B cell (primary cell): ENCODE measurements at regions of chr3 and their contacts with region 1.

Region 1: GRCh38 chr3:71176366-71176765 is 407.2 kb downstream of the FOXP1 start:
- DNase-seq: no peak
- ATAC-seq: no peak
- H3K4me3 ChIP-seq: no peak overlapping the region
- H3K4me3 Mint-ChIP-seq: no peak overlapping the region
- H3K27ac ChIP-seq: no peak overlapping the region
- H3K27ac Mint-ChIP-seq: no peak overlapping the region
- H3K4me1 ChIP-seq: no peaks in the 10 kb centered on the region
- H3K4me1 Mint-ChIP-seq: peaks cover 13% of the 10 kb centered on the region
- H3K27me3 ChIP-seq: no peaks in the 10 kb centered on the region
- H3K27me3 Mint-ChIP-seq: no peaks in the 10 kb centered on the region
- CTCF ChIP-seq: no peak

Region 2: GRCh38 chr3:71142440-71143161 is 33.8 kb before region 1 on chr3:
- CTCF ChIA-PET with region 1: no interaction called
- POLR2A ChIA-PET with region 1: interaction called, 11 read pairs
- intact Hi-C with region 1: no loop called
- DNase-seq: peak; percentile 53
- ATAC-seq: peak; percentile 55
- H3K4me3 ChIP-seq: no peak overlapping the region
- H3K4me3 Mint-ChIP-seq: no peak overlapping the region
- H3K27ac ChIP-seq: peak overlapping the region in 1 of 2 donors; percentile 56
- H3K27ac Mint-ChIP-seq: peak overlapping the region; percentile 78
- H3K4me1 ChIP-seq: peaks cover 3 to 6% of the 10 kb centered on the region in 2 donors
- H3K4me1 Mint-ChIP-seq: peaks cover 35% of the 10 kb centered on the region
- H3K27me3 ChIP-seq: no peaks in the 10 kb centered on the region
- H3K27me3 Mint-ChIP-seq: no peaks in the 10 kb centered on the region
- CTCF ChIP-seq: no peak

Region 3: GRCh38 chr3:71160800-71161546 is 15.4 kb before region 1 on chr3:
- CTCF ChIA-PET with region 1: no interaction called
- POLR2A ChIA-PET with region 1: no interaction called
- intact Hi-C with region 1: no loop called
- DNase-seq: no peak
- ATAC-seq: no peak
- H3K4me3 ChIP-seq: no peak overlapping the region
- H3K4me3 Mint-ChIP-seq: no peak overlapping the region
- H3K27ac ChIP-seq: no peak overlapping the region
- H3K27ac Mint-ChIP-seq: peak overlapping the region; percentile 17
- H3K4me1 ChIP-seq: peaks cover 2 to 4% of the 10 kb centered on the region in 2 donors
- H3K4me1 Mint-ChIP-seq: peaks cover 36% of the 10 kb centered on the region
- H3K27me3 ChIP-seq: no peaks in the 10 kb centered on the region
- H3K27me3 Mint-ChIP-seq: no peaks in the 10 kb centered on the region
- CTCF ChIP-seq: no peak

Region 4: DNA sequence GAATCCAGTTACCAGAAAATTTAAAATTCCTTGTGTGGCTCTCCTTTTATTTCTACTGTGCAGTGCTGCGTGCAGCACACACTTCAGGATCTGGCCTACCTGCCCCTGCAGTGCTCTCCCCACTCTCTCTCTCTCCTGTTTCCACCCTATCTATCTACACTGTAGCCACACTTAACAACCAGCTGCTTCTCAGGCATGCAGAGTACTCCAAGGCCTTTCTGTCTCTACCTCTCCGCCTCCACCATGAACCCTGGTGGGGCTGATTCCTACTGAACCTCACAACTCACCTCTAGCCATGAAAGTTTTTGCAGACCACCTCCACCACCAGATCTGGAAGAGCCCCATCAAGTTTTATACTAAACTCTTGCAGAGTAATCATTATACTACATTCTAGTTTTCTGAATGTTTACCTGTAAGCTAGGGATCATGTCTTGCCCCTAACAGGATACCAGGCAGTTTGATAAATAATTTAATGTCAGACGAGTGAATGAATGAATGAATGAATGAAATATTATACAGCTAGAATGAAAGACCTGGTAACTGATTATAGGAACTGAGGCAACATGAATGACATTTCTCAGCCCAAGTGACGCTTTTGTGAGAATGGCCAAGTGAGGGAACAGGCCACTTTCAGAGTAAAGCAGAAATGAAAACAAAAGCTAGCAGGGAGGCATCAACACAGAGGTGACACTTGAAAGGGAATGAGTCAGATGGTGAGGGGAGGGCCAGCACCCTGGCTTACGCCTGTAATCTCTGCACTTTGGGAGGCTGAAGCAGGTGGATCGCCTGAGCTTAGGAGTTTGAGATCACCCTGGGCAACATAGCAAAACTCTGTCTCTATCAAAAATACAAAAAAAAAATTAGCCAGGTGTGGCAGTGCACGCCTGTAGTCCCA is 43.6 kb after region 1 on chr3:
- CTCF ChIA-PET with region 1: no interaction called
- POLR2A ChIA-PET with region 1: no interaction called
- intact Hi-C with region 1: loop called (anchors 5 kb)
- DNase-seq: no peak
- ATAC-seq: peak; percentile 73
- H3K4me3 ChIP-seq: no peak overlapping the region
- H3K4me3 Mint-ChIP-seq: no peak overlapping the region
- H3K27ac ChIP-seq: no peak overlapping the region
- H3K27ac Mint-ChIP-seq: peak overlapping the region; percentile 73
- H3K4me1 ChIP-seq: peaks cover 21 to 24% of the 10 kb centered on the region in 2 donors
- H3K4me1 Mint-ChIP-seq: peaks cover 64% of the 10 kb centered on the region
- H3K27me3 ChIP-seq: no peaks in the 10 kb centered on the region
- H3K27me3 Mint-ChIP-seq: no peaks in the 10 kb centered on the region
- CTCF ChIP-seq: no peak

Region 5: DNA sequence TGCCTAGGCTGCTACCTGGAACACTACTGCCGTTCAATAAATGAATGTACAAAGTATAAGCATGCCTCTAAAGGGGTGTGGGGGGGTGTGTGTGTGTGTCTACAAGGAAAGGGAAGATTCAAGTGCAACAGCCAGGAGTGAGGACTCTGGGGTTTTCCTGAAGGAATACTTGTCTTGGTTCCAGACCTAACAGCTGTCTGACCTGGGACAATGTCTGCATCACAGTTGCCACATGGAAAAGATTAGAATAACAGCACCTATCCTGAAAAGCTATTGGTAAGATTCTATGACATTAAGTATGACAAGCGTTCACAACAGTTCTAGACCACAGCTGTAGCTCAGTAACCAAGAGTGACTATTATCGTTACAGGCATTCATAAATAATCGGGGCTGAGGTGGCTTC is 62.0 kb after region 1 on chr3:
- CTCF ChIA-PET with region 1: no interaction called
- POLR2A ChIA-PET with region 1: no interaction called
- intact Hi-C with region 1: no loop called
- DNase-seq: no peak
- ATAC-seq: no peak
- H3K4me3 ChIP-seq: no peak overlapping the region
- H3K4me3 Mint-ChIP-seq: no peak overlapping the region
- H3K27ac ChIP-seq: peak overlapping the region in 1 of 2 donors; percentile 5
- H3K27ac Mint-ChIP-seq: peak overlapping the region; percentile 47
- H3K4me1 ChIP-seq: peaks cover 12 to 30% of the 10 kb centered on the region in 2 donors
- H3K4me1 Mint-ChIP-seq: peaks cover 55% of the 10 kb centered on the region
- H3K27me3 ChIP-seq: no peaks in the 10 kb centered on the region
- H3K27me3 Mint-ChIP-seq: no peaks in the 10 kb centered on the region
- CTCF ChIP-seq: no peak

Region 6: DNA sequence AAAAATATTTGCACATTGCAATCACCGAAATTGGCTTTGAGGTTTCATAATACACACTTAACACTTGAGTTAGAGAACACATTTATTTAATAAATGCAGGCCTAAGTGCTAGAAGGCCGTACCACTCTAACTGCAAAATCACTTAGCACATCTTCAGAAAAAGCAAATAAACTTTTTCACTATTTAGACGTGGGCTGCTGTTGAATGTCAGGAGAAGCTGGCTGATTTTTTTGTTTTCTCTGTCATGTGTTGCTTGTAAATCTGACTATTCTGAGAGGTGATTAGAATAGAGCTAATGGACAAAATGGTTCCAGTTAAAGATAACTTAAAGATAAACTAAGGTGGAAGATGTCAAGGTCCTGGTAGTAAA is 142.1 kb after region 1 on chr3:
- CTCF ChIA-PET with region 1: no interaction called
- POLR2A ChIA-PET with region 1: no interaction called
- intact Hi-C with region 1: no loop called
- DNase-seq: no peak
- ATAC-seq: no peak
- H3K4me3 ChIP-seq: no peak overlapping the region
- H3K4me3 Mint-ChIP-seq: peak overlapping the region; percentile 2
- H3K27ac ChIP-seq: no peak overlapping the region
- H3K27ac Mint-ChIP-seq: no peak overlapping the region
- H3K4me1 ChIP-seq: peaks cover 37 to 45% of the 10 kb centered on the region in 2 donors
- H3K4me1 Mint-ChIP-seq: peaks cover 39% of the 10 kb centered on the region
- H3K27me3 ChIP-seq: no peaks in the 10 kb centered on the region
- H3K27me3 Mint-ChIP-seq: no peaks in the 10 kb centered on the region
- CTCF ChIP-seq: no peak